ENCODE measurements at regions of chr1 and their contacts with region 1.

Region 1: GRCh38 chr1:145978854-145979759 is 14.6 kb downstream of the POLR3GL start:
- DNase-seq: peak; percentile 85
- CTCF ChIP-seq: peak; percentile 42

Region 2: DNA sequence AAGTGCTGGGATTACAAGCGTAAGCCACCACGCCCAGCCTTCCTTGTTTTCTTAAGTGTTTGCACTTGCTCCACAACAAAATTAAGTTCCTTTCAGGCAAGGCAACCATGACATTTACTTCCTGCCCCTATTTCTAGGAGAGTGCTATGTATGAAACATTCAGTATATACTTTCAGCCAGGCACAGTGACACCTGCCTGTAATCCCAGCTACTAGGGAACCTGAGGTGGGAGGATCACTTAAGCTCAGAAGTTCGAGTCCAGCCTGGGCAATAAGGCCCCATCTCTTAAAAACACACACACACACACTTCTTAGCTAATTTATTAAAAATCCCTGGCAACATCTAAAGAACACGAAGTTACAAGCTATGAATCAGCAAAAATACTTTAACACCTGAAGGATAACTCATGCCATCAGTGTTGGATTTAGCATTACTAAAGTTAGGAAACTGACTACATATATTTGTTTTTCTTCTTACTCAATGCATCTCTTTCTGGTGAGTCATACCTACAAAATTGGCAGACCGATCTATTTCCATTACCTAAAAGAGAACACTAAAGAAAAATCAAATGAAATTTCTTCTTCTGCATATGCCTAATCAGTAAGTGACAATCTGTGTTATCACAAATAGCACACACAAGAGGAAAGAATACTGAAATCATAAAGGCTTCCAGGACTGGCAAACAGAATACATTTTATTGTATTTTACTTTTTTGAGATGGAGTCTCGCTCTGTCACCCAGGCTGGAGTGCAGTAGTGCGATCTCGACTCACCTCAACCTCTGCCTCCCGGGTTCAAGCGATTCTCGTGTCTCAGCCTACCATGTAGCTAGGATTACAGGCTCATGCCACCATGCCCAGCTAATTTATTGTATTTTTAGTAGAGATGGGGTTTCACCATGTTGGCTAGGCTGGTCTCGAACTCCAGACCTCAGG is 196.7 kb before region 1 on chr1:
- CTCF ChIA-PET with region 1: no interaction called
- POLR2A ChIA-PET with region 1: no interaction called
- DNase-seq: no peak
- CTCF ChIP-seq: no peak

Region 3: GRCh38 chr1:145804235-145805045 is 174.7 kb before region 1 on chr1:
- CTCF ChIA-PET with region 1: no interaction called
- POLR2A ChIA-PET with region 1: no interaction called
- DNase-seq: no peak
- CTCF ChIP-seq: no peak

Region 4: DNA sequence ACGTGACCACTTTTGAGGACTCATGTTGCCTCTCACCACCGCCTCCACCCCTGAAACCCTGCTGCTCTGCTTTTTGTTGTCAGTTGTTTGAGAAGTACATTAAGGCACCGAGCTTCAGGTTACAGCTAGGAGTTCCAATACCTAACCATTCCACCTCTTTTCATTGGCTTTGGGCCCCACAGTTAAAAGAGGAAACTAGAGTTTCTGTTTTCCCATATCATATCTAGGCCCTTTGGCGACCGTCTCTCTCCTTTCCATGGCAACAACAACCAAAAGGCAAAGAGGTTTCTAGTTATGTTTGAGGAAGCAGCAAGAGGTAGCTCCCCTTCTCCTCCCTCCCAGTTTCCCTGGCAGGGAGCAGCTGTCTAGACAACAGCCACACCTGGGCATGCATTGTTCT is 99.3 kb before region 1 on chr1:
- CTCF ChIA-PET with region 1: no interaction called
- POLR2A ChIA-PET with region 1: no interaction called
- DNase-seq: no peak
- CTCF ChIP-seq: no peak

Region 5: DNA sequence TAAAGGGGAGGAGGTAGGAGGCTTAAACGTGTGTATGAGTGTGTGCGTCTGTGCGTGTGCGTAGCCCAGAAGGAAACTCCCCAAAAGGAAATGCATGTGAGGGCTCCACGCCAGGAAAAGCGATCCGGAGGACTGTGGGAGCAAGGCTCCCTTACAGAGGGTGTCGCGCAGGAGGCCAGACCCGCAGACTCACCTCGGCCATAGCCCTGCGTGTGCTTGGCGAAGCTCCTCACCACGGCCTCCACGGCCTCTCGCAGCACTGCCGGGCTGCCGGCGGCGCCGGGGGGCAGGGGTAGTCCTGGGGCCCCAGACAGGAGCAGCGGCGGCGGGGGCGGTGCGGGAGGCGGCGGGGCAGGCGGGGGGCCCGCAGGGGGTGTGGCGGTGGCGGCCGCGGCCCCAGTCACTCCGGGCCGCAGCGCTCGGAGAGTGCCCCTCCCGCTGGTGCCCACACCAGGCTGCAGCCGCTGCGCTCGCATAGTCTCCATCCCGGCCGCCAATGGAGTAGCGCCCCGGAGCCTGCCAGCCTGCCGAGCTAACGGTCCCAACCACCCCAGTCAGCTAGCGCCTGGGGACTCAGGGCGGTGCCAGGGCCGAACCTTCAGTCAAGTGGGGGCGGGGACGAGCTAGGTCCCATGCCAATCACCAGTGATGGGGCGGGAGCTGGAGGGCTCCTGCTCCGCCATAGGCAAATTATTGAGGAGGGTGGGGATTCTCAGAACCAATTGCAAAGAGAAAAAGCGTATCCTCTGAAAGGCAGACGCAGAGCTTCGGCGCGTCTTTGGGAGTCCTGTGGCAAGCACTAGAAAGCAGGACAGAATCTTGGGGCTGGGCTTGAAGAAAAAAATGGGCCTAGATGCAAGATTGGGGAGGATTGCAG is 21.4 kb before region 1 on chr1 and contains the start of gene LIX1L:
- CTCF ChIA-PET with region 1: interaction called, 113 read pairs
- POLR2A ChIA-PET with region 1: interaction called, 9 read pairs
- DNase-seq: peak; percentile 95
- CTCF ChIP-seq: no peak

Region 6: GRCh38 chr1:145990249-145991097 is 11.4 kb after region 1 on chr1:
- CTCF ChIA-PET with region 1: interaction called, 176 read pairs
- POLR2A ChIA-PET with region 1: interaction called, 25 read pairs
- DNase-seq: no peak
- CTCF ChIP-seq: no peak

Region 7: DNA sequence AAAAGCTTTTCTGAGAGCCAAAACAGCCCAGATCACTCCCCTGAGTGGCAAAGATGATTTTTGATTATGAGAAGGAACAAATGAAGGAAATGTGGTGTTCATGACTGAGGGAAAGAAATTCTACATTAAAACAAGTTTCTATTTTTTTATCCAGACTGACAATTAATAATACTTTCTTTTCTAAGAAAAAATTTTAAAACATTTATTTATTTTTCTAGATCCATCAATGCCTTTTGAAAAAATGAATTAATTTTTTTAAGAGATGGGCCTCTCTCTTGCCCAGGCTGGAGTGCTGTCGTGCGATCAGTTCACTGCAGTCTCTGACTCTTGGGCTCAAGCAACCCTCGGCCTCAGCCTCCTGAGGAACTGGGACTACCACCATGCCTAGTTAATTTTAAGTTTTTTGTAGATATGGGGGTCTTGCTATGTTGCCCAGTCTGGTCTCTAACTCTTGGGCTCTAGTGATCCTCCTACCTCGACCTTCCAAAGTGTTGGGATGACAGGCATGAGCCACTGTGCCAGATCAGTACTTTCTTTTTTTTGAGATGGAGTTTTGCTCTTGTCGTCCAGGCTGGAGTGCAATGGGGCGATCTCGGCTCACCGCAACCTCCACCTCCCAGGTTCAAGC is 28.5 kb after region 1 on chr1:
- CTCF ChIA-PET with region 1: interaction called, 249 read pairs
- POLR2A ChIA-PET with region 1: interaction called, 3 read pairs
- DNase-seq: no peak
- CTCF ChIP-seq: no peak

Region 8: GRCh38 chr1:146019231-146020057 is 40.3 kb after region 1 on chr1:
- CTCF ChIA-PET with region 1: interaction called, 32 read pairs
- POLR2A ChIA-PET with region 1: no interaction called
- DNase-seq: no peak
- CTCF ChIP-seq: no peak